ENCODE measurements at regions of chr4 and their contacts with region 1.

Region 1: GRCh38 chr4:7101692-7102515 is 34.0 kb upstream of the GRPEL1 start:
- DNase-seq: peak in 7 of 9 experiments; percentile 23 to 66 (median 50)
- ATAC-seq: peak; percentile 39
- H3K4me3 ChIP-seq: peak overlapping the region; percentile 84 to 90
- H3K4me3 Mint-ChIP-seq: peak overlapping the region; percentile 91
- H3K27ac ChIP-seq: no peak overlapping the region
- H3K27ac Mint-ChIP-seq: peak overlapping the region; percentile 45
- H3K4me1 ChIP-seq: peaks cover 25% of the 10 kb centered on the region
- H3K4me1 Mint-ChIP-seq: peaks cover 16% of the 10 kb centered on the region
- H3K27me3 ChIP-seq: no peaks in the 10 kb centered on the region
- H3K27me3 Mint-ChIP-seq: no peaks in the 10 kb centered on the region
- CTCF ChIP-seq: peak; percentile 46

Region 2: GRCh38 chr4:6269616-6270511 is 832.0 kb before region 1 on chr4 and contains the start of gene WFS1:
- CTCF ChIA-PET with region 1: no interaction called
- POLR2A ChIA-PET with region 1: no interaction called
- intact Hi-C with region 1: loop called in 1 of 2 experiments (anchors 5 kb)
- DNase-seq: peak; percentile 93 to 99 (median 97)
- ATAC-seq: peak; percentile 98
- H3K4me3 ChIP-seq: peak within 1 kb of the TSS; percentile 56 to 70
- H3K4me3 Mint-ChIP-seq: peak within 1 kb of the TSS; percentile 87
- H3K27ac ChIP-seq: peak within 1 kb of the TSS in 1 of 2 experiments; percentile 11
- H3K27ac Mint-ChIP-seq: peak within 1 kb of the TSS; percentile 41
- H3K4me1 ChIP-seq: peaks cover 13% of the 10 kb centered on the region
- H3K4me1 Mint-ChIP-seq: peaks cover 20% of the 10 kb centered on the region
- H3K27me3 ChIP-seq: no peaks in the 10 kb centered on the region
- H3K27me3 Mint-ChIP-seq: no peaks in the 10 kb centered on the region
- CTCF ChIP-seq: no peak
- total RNA-seq, gene WFS1: 1.2 to 1.8 TPM

Region 3: GRCh38 chr4:7042697-7043464 is 59.0 kb before region 1 on chr4 and contains the start of gene TADA2B:
- CTCF ChIA-PET with region 1: interaction called, 3 read pairs
- POLR2A ChIA-PET with region 1: no interaction called
- intact Hi-C with region 1: loop called in 1 of 2 experiments (anchors 2 kb)
- DNase-seq: peak; percentile 74 to 95 (median 89)
- ATAC-seq: peak; percentile 76
- H3K4me3 ChIP-seq: peak within 1 kb of the TSS; percentile 83 to 94
- H3K4me3 Mint-ChIP-seq: peak within 1 kb of the TSS; percentile 91
- H3K27ac ChIP-seq: peak within 1 kb of the TSS; percentile 63 to 84
- H3K27ac Mint-ChIP-seq: peak within 1 kb of the TSS; percentile 88
- H3K4me1 ChIP-seq: peaks cover 40% of the 10 kb centered on the region
- H3K4me1 Mint-ChIP-seq: peaks cover 44% of the 10 kb centered on the region
- H3K27me3 ChIP-seq: no peaks in the 10 kb centered on the region
- H3K27me3 Mint-ChIP-seq: no peaks in the 10 kb centered on the region
- CTCF ChIP-seq: no peak
- total RNA-seq, gene TADA2B: 41.9 to 45.4 TPM

Region 4: DNA sequence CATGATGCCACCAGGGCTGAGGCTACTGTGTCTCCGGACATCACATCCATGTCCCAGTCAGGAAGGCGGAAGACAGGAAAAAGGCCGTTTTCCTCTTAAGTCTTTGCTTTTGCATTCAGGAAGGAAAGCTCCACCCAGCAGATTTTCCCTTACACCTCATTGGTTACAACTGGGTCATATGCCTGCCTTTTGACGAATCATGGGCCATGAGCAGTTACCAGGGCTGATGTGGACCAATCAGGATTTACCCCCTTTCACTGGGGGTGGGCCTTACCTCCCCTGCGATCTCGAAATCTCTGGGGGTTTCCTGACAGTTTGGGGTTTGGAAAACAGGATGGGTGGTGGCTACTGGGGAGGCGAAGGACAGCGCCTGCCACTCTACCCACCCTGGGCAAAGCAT is 18.4 kb after region 1 on chr4:
- CTCF ChIA-PET with region 1: no interaction called
- POLR2A ChIA-PET with region 1: no interaction called
- intact Hi-C with region 1: no loop called
- DNase-seq: no peak
- ATAC-seq: no peak
- H3K4me3 ChIP-seq: no peak overlapping the region
- H3K4me3 Mint-ChIP-seq: no peak overlapping the region
- H3K27ac ChIP-seq: no peak overlapping the region
- H3K27ac Mint-ChIP-seq: no peak overlapping the region
- H3K4me1 ChIP-seq: no peaks in the 10 kb centered on the region
- H3K4me1 Mint-ChIP-seq: no peaks in the 10 kb centered on the region
- H3K27me3 ChIP-seq: peaks cover 0 to 4% of the 10 kb centered on the region in 2 experiments
- H3K27me3 Mint-ChIP-seq: peaks cover 37% of the 10 kb centered on the region
- CTCF ChIP-seq: no peak

Region 5: GRCh38 chr4:7761720-7762119 is 659.8 kb after region 1 on chr4:
- CTCF ChIA-PET with region 1: no interaction called
- POLR2A ChIA-PET with region 1: no interaction called
- intact Hi-C with region 1: loop called in 1 of 2 experiments (anchors 5 kb)
- DNase-seq: peak; percentile 24 to 73 (median 55)
- ATAC-seq: peak; percentile 64
- H3K4me3 ChIP-seq: no peak overlapping the region
- H3K4me3 Mint-ChIP-seq: peak overlapping the region; percentile 8
- H3K27ac ChIP-seq: peak overlapping the region in 1 of 2 experiments; percentile 31
- H3K27ac Mint-ChIP-seq: peak overlapping the region; percentile 84
- H3K4me1 ChIP-seq: peaks cover 35% of the 10 kb centered on the region
- H3K4me1 Mint-ChIP-seq: peaks cover 32% of the 10 kb centered on the region
- H3K27me3 ChIP-seq: no peaks in the 10 kb centered on the region
- H3K27me3 Mint-ChIP-seq: no peaks in the 10 kb centered on the region
- CTCF ChIP-seq: peak; percentile 51